ENCODE measurements at regions of chr11 and their contacts with region 1.

Region 1: DNA sequence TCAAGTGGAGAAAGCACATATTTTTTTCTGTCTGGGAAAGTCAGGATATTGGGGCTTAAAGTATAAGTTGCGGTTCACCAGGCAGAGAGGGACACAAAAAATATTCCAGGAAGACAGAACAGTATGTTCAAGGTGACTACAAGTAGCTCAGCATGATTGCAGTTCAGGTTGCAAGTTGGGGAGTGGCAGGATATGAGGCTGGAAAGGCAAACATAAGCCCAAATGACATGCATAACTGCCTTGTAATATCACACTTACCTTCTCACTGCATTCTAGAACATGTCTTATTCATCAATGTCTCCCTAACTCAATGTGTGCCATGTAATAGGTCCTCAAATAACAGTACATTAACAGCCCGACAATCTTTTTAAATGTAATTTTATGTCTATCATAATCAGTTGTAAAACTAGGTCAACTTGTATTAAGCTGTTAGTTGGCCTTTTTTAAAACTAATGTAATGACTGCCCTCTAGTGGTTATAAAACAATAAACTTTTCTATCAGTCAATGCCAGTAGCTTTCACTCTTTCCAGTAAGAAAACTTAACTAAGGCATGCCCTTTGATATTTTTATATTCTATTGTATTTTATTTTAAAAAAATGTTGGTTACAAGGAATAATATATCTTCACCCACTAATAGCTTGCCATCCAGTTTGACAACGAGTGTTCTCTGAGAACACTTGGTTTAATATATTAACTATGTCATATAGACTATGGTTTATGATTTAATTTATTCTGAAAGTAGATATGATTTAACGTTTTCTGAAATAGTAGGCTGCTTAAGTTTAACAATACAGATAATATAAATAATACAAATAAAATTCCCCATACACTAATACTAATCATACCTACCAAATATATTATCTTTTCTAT is 39.4 kb upstream of the CFAP300 start:
- DNase-seq: peak; percentile 78
- H3K4me3 ChIP-seq: no peak overlapping the region
- H3K27ac ChIP-seq: no peak overlapping the region
- H3K4me1 ChIP-seq: peaks cover 15% of the 10 kb centered on the region
- H3K27me3 ChIP-seq: no peaks in the 10 kb centered on the region
- CTCF ChIP-seq: peak; percentile 7 to 15
- POLR2A ChIP-seq: peak; percentile 17

Region 2: DNA sequence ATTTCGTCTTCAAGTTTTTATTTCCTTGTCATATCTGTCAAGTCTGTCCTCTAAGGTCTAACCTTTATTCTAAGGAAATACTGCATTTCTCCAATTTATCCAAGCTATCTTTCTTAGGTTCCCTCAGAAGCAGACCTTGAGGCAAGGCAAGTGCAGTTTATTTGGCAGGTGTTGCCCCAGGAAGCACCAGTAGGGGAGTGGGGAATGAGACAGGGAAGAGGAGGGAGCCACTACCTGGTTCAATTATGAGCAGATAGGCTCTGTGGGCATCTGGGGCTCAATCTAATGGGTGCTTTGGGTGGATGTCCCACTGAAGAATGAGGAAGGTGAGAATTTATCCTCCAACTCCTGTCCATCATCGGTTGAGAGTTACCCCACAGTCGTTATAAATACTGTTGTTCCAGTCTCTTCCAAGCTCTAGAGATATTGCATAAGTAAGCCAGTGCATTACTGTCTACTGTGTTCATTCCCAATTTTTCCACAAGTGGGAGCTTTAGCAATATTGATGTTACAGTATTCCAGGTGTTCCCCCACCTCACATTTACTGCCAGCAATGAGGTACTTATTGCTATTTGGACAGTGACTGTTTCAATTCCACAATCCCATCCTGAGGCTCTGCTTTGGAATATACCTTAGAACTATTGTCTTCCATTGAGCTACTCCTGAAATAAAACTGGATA is 247.9 kb before region 1 on chr11:
- CTCF ChIA-PET with region 1: interaction called, 14 read pairs
- POLR2A ChIA-PET with region 1: no interaction called
- dilution Hi-C with region 1: no loop called
- intact Hi-C with region 1: loop called (anchors 1 kb)
- DNase-seq: peak; percentile 6
- H3K4me3 ChIP-seq: no peak overlapping the region
- H3K27ac ChIP-seq: no peak overlapping the region
- H3K4me1 ChIP-seq: no peaks in the 10 kb centered on the region
- H3K27me3 ChIP-seq: peaks cover 0 to 2% of the 10 kb centered on the region in 2 experiments
- CTCF ChIP-seq: no peak
- POLR2A ChIP-seq: no peak

Region 3: GRCh38 chr11:101880222-101880621 is 127.6 kb before region 1 on chr11:
- CTCF ChIA-PET with region 1: interaction called, 13 read pairs
- POLR2A ChIA-PET with region 1: no interaction called
- dilution Hi-C with region 1: no loop called
- intact Hi-C with region 1: no loop called
- DNase-seq: peak; percentile 61
- H3K4me3 ChIP-seq: no peak overlapping the region
- H3K27ac ChIP-seq: no peak overlapping the region
- H3K4me1 ChIP-seq: no peaks in the 10 kb centered on the region
- H3K27me3 ChIP-seq: no peaks in the 10 kb centered on the region
- CTCF ChIP-seq: peak; percentile 37 to 53
- POLR2A ChIP-seq: no peak

Region 4: GRCh38 chr11:101929294-101929916 is 78.4 kb before region 1 on chr11:
- CTCF ChIA-PET with region 1: no interaction called
- POLR2A ChIA-PET with region 1: no interaction called
- dilution Hi-C with region 1: no loop called
- intact Hi-C with region 1: no loop called
- DNase-seq: no peak
- H3K4me3 ChIP-seq: no peak overlapping the region
- H3K27ac ChIP-seq: no peak overlapping the region
- H3K4me1 ChIP-seq: no peaks in the 10 kb centered on the region
- H3K27me3 ChIP-seq: no peaks in the 10 kb centered on the region
- CTCF ChIP-seq: no peak
- POLR2A ChIP-seq: no peak

Region 5: GRCh38 chr11:101974255-101974654 is 33.5 kb before region 1 on chr11:
- CTCF ChIA-PET with region 1: interaction called, 12 read pairs
- POLR2A ChIA-PET with region 1: no interaction called
- dilution Hi-C with region 1: no loop called
- intact Hi-C with region 1: no loop called
- DNase-seq: no peak
- H3K4me3 ChIP-seq: no peak overlapping the region
- H3K27ac ChIP-seq: no peak overlapping the region
- H3K4me1 ChIP-seq: no peaks in the 10 kb centered on the region
- H3K27me3 ChIP-seq: no peaks in the 10 kb centered on the region
- CTCF ChIP-seq: no peak
- POLR2A ChIP-seq: no peak

Region 6: GRCh38 chr11:101996111-101996510 is 11.7 kb before region 1 on chr11:
- CTCF ChIA-PET with region 1: interaction called, 35 read pairs
- POLR2A ChIA-PET with region 1: no interaction called
- dilution Hi-C with region 1: no loop called
- intact Hi-C with region 1: no loop called
- DNase-seq: no peak
- H3K4me3 ChIP-seq: no peak overlapping the region
- H3K27ac ChIP-seq: no peak overlapping the region
- H3K4me1 ChIP-seq: no peaks in the 10 kb centered on the region
- H3K27me3 ChIP-seq: no peaks in the 10 kb centered on the region
- CTCF ChIP-seq: no peak
- POLR2A ChIP-seq: no peak

Region 7: DNA sequence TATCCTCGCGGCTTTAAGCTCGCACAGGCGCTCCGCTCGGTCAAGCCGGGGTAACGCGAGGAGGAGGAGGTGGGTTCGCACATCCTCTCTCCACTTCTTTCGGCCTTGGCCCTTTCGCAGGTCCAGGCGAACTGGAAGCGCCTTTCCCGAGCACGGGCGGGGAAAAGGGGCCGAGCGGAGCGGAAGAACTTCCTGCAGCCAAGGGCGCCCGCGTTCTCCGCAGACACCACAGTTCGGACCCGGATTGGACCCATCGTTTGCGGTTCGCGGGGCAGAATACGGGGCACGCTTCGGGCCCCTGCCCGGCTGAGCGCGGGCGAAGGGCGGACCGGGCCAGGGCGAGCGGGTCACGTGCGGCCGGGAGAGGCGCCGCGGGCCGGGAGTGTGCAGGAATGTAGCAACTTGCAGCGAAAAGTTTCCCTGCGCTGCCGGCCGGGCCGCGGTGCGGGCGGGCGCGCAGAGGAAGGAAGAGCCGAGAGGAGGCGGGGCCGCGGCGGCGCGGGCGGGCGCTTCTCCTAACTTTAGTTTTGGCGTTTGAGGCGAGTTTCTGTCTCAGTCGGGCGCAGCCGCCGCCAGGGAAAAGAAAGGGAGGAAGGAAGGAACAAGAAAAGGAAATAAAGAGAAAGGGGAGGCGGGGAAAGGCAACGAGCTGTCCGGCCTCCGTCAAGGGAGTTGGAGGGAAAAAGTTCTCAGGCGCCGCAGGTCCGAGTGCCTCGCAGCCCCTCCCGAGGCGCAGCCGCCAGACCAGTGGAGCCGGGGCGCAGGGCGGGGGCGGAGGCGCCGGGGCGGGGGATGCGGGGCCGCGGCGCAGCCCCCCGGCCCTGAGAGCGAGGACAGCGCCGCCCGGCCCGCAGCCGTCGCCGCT is 102.3 kb after region 1 on chr11 and contains the start of gene YAP1:
- CTCF ChIA-PET with region 1: interaction called, 3 read pairs
- POLR2A ChIA-PET with region 1: no interaction called
- dilution Hi-C with region 1: no loop called
- intact Hi-C with region 1: loop called (anchors 2 kb)
- DNase-seq: peak; percentile 89
- H3K4me3 ChIP-seq: peak within 1 kb of the TSS; percentile 85 to 99 (median 88)
- H3K27ac ChIP-seq: peak within 1 kb of the TSS; percentile 72
- H3K4me1 ChIP-seq: peaks cover 11% of the 10 kb centered on the region
- H3K27me3 ChIP-seq: peaks cover 2 to 18% of the 10 kb centered on the region in 2 experiments
- CTCF ChIP-seq: no peak
- POLR2A ChIP-seq: no peak
- total RNA-seq, gene YAP1: 36.5 and 48.9 TPM in 2 replicates

Region 8: DNA sequence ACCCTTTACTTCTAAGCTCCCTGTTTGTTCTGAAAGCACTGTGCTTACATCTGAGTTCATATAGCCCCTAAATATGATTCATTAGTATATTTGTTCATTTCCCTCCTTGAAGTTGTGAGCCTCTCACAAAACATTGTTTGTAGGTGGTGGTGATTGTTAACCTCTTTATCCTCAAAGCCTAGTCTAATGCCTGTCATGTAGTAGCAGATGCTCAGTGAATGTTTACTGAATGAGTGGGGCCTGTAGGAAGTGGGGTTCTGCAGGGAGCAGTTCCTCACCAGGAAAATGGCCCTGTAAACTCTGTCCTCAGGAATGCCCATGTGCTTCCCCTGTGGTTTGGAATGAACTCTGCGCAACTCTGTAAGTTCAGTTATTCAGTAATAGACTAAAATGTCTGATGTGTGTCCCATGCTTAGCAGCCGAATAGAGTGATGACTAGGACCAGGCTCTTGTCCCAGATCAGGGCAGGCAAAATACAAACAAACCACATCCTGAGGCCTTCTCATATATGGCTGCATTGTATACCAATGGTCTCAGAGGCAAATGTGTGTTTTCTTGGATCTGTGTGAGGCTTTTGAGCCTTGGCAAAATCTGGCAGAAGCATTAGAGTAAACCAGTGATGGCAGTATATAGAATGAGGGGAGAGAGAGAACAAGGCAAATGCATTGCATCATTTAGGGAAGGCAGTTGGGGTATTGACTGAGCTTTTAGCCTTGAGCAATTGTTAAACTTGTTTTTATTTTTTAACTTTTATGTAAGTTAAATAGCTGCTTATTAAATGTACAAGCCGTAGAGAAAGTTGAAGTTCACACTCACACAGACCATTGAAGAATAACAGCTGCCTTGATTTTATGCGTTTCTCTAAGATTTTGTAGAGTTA is 218.1 kb after region 1 on chr11:
- CTCF ChIA-PET with region 1: no interaction called
- POLR2A ChIA-PET with region 1: no interaction called
- dilution Hi-C with region 1: no loop called
- intact Hi-C with region 1: loop called (anchors 2 kb)
- DNase-seq: peak; percentile 87
- H3K4me3 ChIP-seq: no peak overlapping the region
- H3K27ac ChIP-seq: peak overlapping the region; percentile 54
- H3K4me1 ChIP-seq: peaks cover 24% of the 10 kb centered on the region
- H3K27me3 ChIP-seq: no peaks in the 10 kb centered on the region
- CTCF ChIP-seq: no peak
- POLR2A ChIP-seq: peak; percentile 40